ENCODE measurements at regions of chr12 and their contacts with region 1.

Region 1: GRCh38 chr12:15522565-15523187 is 200.4 kb downstream of the PTPRO start:
- DNase-seq: no peak
- H3K4me3 ChIP-seq: no peak overlapping the region
- H3K27ac ChIP-seq: no peak overlapping the region
- H3K4me1 ChIP-seq: no peaks in the 10 kb centered on the region
- H3K27me3 ChIP-seq: no peaks in the 10 kb centered on the region
- CTCF ChIP-seq: peak; percentile 29

Region 2: GRCh38 chr12:15151161-15152120 is 371.2 kb before region 1 on chr12:
- intact Hi-C with region 1: loop called (anchors 10 kb)
- DNase-seq: no peak
- H3K4me3 ChIP-seq: no peak overlapping the region
- H3K27ac ChIP-seq: peak overlapping the region; percentile 2
- H3K4me1 ChIP-seq: no peaks in the 10 kb centered on the region
- H3K27me3 ChIP-seq: no peaks in the 10 kb centered on the region
- CTCF ChIP-seq: peak; percentile 26

Region 3: GRCh38 chr12:15227004-15227679 is 295.5 kb before region 1 on chr12:
- intact Hi-C with region 1: loop called (anchors 5 kb)
- DNase-seq: peak; percentile 45
- H3K4me3 ChIP-seq: no peak overlapping the region
- H3K27ac ChIP-seq: no peak overlapping the region
- H3K4me1 ChIP-seq: no peaks in the 10 kb centered on the region
- H3K27me3 ChIP-seq: no peaks in the 10 kb centered on the region
- CTCF ChIP-seq: peak; percentile 57

Region 4: GRCh38 chr12:15276088-15276698 is 246.5 kb before region 1 on chr12:
- intact Hi-C with region 1: loop called (anchors 2 kb)
- DNase-seq: peak; percentile 38
- H3K4me3 ChIP-seq: no peak overlapping the region
- H3K27ac ChIP-seq: no peak overlapping the region
- H3K4me1 ChIP-seq: no peaks in the 10 kb centered on the region
- H3K27me3 ChIP-seq: no peaks in the 10 kb centered on the region
- CTCF ChIP-seq: peak; percentile 60

Region 5: GRCh38 chr12:15808652-15809051 is 286.0 kb after region 1 on chr12:
- intact Hi-C with region 1: no loop called
- DNase-seq: no peak
- H3K4me3 ChIP-seq: no peak overlapping the region
- H3K27ac ChIP-seq: no peak overlapping the region
- H3K4me1 ChIP-seq: no peaks in the 10 kb centered on the region
- H3K27me3 ChIP-seq: no peaks in the 10 kb centered on the region
- CTCF ChIP-seq: no peak

Region 6: DNA sequence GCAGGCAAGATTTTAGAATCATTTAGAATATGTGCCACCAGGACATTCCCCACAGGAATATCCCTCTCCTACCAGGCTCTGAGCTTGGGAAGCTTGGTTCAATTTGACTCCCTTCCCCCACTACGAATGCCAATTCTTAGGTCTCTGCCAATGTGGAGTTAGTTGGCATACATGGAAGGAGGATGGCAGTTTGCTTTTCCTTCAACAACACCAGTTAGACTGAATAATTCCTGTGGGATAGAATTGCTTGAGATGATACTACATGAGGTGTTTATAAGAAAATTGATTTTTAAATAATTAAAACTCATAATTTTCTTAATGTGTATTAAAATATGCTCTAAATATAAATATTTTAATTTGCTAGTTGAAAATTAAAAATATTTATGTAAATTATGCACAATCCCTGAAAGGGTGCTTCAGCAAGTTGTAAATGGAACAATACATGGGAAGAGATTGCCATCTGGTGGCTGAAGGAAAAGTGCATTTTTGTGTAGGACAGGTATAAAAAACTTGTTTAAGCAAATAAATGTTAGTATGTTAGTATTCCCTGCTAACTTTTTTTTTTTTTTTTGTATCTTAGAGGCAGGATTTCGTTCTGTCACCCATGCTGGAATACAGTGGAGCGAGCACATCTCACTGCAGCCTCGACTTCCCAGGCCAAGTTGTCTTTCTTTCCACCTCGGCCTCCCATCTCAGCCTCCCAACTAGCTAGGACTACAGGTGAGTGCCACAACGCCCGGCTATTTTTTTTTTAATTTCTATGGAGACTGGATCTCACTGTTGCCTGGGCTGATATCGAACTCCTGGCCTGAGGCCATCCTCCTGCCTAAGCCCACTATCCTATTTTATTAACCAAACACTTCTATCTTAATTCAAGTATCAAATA is 333.7 kb after region 1 on chr12:
- intact Hi-C with region 1: loop called (anchors 10 kb)
- DNase-seq: peak; percentile 78
- H3K4me3 ChIP-seq: no peak overlapping the region
- H3K27ac ChIP-seq: no peak overlapping the region
- H3K4me1 ChIP-seq: peaks cover 5% of the 10 kb centered on the region
- H3K27me3 ChIP-seq: no peaks in the 10 kb centered on the region
- CTCF ChIP-seq: peak; percentile 76